ENCODE measurements at regions of chr3 and their contacts with region 1.

Region 1: GRCh38 chr3:128680602-128681368 is 30.2 kb upstream of the RPN1 start:
- DNase-seq: peak; percentile 97
- ATAC-seq: peak; percentile 99
- H3K4me3 ChIP-seq: peak overlapping the region; percentile 60
- H3K27ac ChIP-seq: peak overlapping the region; percentile 96
- H3K4me1 ChIP-seq: no peaks in the 10 kb centered on the region
- H3K27me3 ChIP-seq: no peaks in the 10 kb centered on the region
- CTCF ChIP-seq: peak; percentile 98
- POLR2A ChIP-seq: peak; percentile 82; the same call in 1 of the 2 replicates
- RAD21 ChIP-seq: peak; percentile 81

Region 2: GRCh38 chr3:128650096-128651050 is 30.4 kb before region 1 on chr3 and contains the start of gene RPN1:
- CTCF ChIA-PET with region 1: interaction called, 5 read pairs
- POLR2A ChIA-PET with region 1: no interaction called
- dilution Hi-C with region 1: no loop called
- in situ Hi-C with region 1: no loop called
- intact Hi-C with region 1: loop called (anchors 2 kb)
- DNase-seq: peak; percentile 94
- ATAC-seq: peak; percentile 99
- H3K4me3 ChIP-seq: peak within 1 kb of the TSS; percentile 98
- H3K27ac ChIP-seq: peak within 1 kb of the TSS; percentile 98
- H3K4me1 ChIP-seq: no peaks in the 10 kb centered on the region
- H3K27me3 ChIP-seq: no peaks in the 10 kb centered on the region
- CTCF ChIP-seq: no peak
- POLR2A ChIP-seq: peak; percentile 95
- RAD21 ChIP-seq: no peak
- total RNA-seq, gene RPN1: 592 and 736 TPM in 2 replicates

Region 3: GRCh38 chr3:128725932-128726690 is 45.3 kb after region 1 on chr3 and contains the start of gene RAB7A:
- CTCF ChIA-PET with region 1: interaction called, 10 read pairs
- POLR2A ChIA-PET with region 1: no interaction called
- dilution Hi-C with region 1: no loop called
- in situ Hi-C with region 1: no loop called
- intact Hi-C with region 1: loop called (anchors 1 kb)
- DNase-seq: peak; percentile 98
- ATAC-seq: peak; percentile 92
- H3K4me3 ChIP-seq: peak within 1 kb of the TSS; percentile 66
- H3K27ac ChIP-seq: peak within 1 kb of the TSS; percentile 76
- H3K4me1 ChIP-seq: peaks cover 11% of the 10 kb centered on the region
- H3K27me3 ChIP-seq: peaks cover 5% of the 10 kb centered on the region; the same call in 1 of the 2 replicates
- CTCF ChIP-seq: no peak
- POLR2A ChIP-seq: peak; percentile 98
- RAD21 ChIP-seq: no peak
- total RNA-seq, gene RAB7A: 57.0 and 65.3 TPM in 2 replicates

Region 4: GRCh38 chr3:128794770-128795649 is 114.2 kb after region 1 on chr3:
- CTCF ChIA-PET with region 1: interaction called, 36 read pairs
- POLR2A ChIA-PET with region 1: no interaction called
- dilution Hi-C with region 1: no loop called
- in situ Hi-C with region 1: no loop called
- intact Hi-C with region 1: loop called (anchors 1 kb)
- DNase-seq: peak; percentile 61
- ATAC-seq: peak; percentile 96
- H3K4me3 ChIP-seq: no peak overlapping the region; the same call in 1 of the 2 replicates
- H3K27ac ChIP-seq: no peak overlapping the region
- H3K4me1 ChIP-seq: peaks cover 6% of the 10 kb centered on the region
- H3K27me3 ChIP-seq: no peaks in the 10 kb centered on the region
- CTCF ChIP-seq: peak; percentile 70
- POLR2A ChIP-seq: no peak
- RAD21 ChIP-seq: peak; percentile 64

Region 5: DNA sequence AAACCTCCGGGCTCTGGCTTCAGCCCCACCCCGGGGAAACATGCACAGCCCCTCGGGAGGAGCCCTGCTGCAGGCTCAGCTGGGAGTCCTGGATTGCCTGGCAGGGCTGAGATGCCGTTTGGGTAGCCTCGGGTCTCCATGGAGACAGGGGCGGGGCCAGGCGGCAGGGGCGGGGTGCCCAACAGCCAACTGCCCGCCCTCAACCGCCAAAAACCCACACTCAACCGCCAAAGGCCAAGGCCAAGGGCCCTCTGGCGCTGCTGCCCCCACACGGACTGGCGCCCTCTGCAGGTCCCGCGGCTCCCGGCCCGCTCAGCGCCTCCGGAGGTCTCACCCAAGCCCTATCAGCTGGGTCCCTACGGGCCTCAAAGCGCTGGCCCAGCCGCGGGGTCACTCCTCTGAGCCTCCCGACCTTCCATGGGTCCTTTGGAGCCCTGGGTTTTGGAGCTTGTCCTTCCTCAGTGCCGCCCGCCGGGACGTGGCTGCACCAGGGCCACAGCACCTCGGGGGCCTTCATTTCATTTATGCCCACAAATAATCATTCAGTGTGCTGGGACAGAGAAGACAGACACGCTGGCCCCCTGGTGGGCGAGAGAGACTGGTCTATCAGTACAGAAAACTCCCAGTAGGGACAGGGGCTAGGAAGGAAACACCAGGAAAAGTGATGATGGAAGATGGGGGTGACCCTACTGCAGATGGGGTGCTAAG is 165.1 kb after region 1 on chr3:
- CTCF ChIA-PET with region 1: interaction called, 10 read pairs
- POLR2A ChIA-PET with region 1: no interaction called
- dilution Hi-C with region 1: no loop called
- in situ Hi-C with region 1: no loop called
- intact Hi-C with region 1: loop called (anchors 1 kb)
- DNase-seq: peak; percentile 48
- ATAC-seq: peak; percentile 95
- H3K4me3 ChIP-seq: peak overlapping the region; percentile 16
- H3K27ac ChIP-seq: no peak overlapping the region; the same call in 1 of the 2 replicates
- H3K4me1 ChIP-seq: peaks cover 6% of the 10 kb centered on the region; the same call in 1 of the 2 replicates
- H3K27me3 ChIP-seq: no peaks in the 10 kb centered on the region
- CTCF ChIP-seq: peak; percentile 54
- POLR2A ChIP-seq: no peak
- RAD21 ChIP-seq: peak; percentile 40

Region 6: GRCh38 chr3:128879125-128879969 is 198.6 kb after region 1 on chr3 and contains the start of gene ACAD9:
- CTCF ChIA-PET with region 1: no interaction called
- POLR2A ChIA-PET with region 1: no interaction called
- dilution Hi-C with region 1: no loop called
- in situ Hi-C with region 1: no loop called
- intact Hi-C with region 1: loop called (anchors 2 kb)
- DNase-seq: peak; percentile 97
- ATAC-seq: peak; percentile 91
- H3K4me3 ChIP-seq: peak within 1 kb of the TSS; percentile 63
- H3K27ac ChIP-seq: peak within 1 kb of the TSS; percentile 68
- H3K4me1 ChIP-seq: peaks cover 7% of the 10 kb centered on the region
- H3K27me3 ChIP-seq: no peaks in the 10 kb centered on the region
- CTCF ChIP-seq: no peak
- POLR2A ChIP-seq: peak; percentile 97
- RAD21 ChIP-seq: no peak; the same call in 1 of the 2 replicates
- total RNA-seq, gene ACAD9: 31.2 and 34.4 TPM in 2 replicates

Region 7: GRCh38 chr3:129077222-129077621 is 396.4 kb after region 1 on chr3:
- CTCF ChIA-PET with region 1: no interaction called
- POLR2A ChIA-PET with region 1: no interaction called
- dilution Hi-C with region 1: no loop called
- in situ Hi-C with region 1: no loop called
- intact Hi-C with region 1: no loop called
- DNase-seq: peak; percentile 80
- ATAC-seq: peak; percentile 89
- H3K4me3 ChIP-seq: no peak overlapping the region
- H3K27ac ChIP-seq: no peak overlapping the region
- H3K4me1 ChIP-seq: 0 out of 2 replicates have a peak, but pooled peaks cover 1% of the 10 kb centered on the region
- H3K27me3 ChIP-seq: no peaks in the 10 kb centered on the region
- CTCF ChIP-seq: no peak
- POLR2A ChIP-seq: no peak
- RAD21 ChIP-seq: no peak

Measured in IMR-90 (cell line).